Posterior vena cava (tissue), 2 donors: ENCODE measurements at regions of chr16 and their contacts with region 1.

Region 1: DNA sequence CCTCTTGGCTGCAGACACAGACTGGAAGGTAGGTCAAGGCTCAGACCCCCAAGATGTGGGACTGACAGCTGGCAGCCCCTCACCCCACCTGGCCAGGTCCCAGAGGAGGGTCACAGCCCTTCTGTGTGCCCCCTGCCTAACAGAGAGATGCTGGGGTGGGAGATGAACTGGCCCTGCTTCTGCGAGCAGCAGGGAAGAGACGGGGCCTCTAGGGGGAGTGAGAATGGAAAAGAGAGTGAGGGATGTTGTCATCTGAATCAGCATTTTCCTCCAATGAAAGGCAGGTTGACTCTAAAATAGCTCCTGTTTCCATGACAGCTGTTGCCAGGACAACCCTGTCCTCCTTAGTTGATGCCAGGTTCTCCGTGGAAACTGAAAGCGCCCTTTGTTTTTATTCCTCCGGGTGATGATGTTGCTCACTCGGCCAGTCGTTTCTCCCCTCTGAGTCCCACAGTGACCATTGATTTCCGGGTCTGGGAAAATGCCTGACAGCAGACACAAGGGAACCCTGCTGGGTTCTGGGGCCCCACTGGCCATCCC is 4.9 kb upstream of the NDRG4 start:
- DNase-seq: peak; percentile 86

Region 2: DNA sequence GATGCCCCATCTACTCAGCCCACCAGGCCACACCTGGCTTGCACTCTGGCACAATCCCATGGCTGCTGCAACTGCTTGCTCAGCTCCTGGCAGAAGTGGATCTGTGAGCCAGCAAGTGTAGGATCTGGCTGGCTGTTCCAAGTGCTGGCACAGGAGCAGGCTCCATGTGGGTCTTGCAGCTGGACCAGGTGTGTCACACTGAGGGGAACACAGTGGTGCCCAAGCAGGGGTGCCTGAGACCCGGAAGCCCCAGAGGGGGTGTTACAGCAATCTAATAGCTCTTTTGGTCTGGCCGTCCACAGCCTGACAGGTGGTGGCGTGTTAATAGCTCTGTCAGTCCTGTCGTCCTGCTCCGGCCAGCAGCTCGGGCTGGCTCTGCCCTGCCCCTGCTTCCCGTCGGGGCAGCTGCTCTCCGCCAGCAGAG is 258.7 kb after region 1 on chr16:
- intact Hi-C with region 1: loop called in 1 of 2 experiments (anchors 5 kb)
- DNase-seq: no peak